ENCODE measurements at regions of chrX and their contacts with region 1.

Region 1: DNA sequence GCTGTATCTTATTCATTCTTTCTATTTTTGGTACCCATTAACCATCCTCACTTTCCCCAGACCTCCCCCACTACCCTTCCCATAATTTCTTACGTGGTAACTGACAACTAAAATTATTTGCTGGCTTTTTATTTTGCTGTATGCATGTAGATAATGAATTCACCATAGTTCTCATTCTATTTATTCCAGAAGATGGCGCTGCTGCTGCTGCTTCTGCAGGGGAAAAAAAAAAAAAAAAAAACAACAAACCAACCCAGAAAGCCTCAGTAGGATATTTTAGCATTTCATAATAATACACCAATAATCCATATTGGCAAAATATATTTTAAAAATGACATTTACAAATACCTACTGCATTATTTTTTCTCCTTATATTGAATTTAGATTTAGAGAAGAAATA is 416.6 kb upstream of the MAGEB18 start:
- DNase-seq: peak in 1 of 2 experiments; percentile 1
- H3K4me3 ChIP-seq: no peak overlapping the region
- H3K4me3 Mint-ChIP-seq: no peak overlapping the region
- H3K27ac Mint-ChIP-seq: no peak overlapping the region
- H3K4me1 ChIP-seq: no peaks in the 10 kb centered on the region
- H3K4me1 Mint-ChIP-seq: no peaks in the 10 kb centered on the region
- H3K27me3 ChIP-seq: no peaks in the 10 kb centered on the region
- H3K27me3 Mint-ChIP-seq: no peaks in the 10 kb centered on the region
- CTCF ChIP-seq: peak; percentile 14 to 26

Region 2: DNA sequence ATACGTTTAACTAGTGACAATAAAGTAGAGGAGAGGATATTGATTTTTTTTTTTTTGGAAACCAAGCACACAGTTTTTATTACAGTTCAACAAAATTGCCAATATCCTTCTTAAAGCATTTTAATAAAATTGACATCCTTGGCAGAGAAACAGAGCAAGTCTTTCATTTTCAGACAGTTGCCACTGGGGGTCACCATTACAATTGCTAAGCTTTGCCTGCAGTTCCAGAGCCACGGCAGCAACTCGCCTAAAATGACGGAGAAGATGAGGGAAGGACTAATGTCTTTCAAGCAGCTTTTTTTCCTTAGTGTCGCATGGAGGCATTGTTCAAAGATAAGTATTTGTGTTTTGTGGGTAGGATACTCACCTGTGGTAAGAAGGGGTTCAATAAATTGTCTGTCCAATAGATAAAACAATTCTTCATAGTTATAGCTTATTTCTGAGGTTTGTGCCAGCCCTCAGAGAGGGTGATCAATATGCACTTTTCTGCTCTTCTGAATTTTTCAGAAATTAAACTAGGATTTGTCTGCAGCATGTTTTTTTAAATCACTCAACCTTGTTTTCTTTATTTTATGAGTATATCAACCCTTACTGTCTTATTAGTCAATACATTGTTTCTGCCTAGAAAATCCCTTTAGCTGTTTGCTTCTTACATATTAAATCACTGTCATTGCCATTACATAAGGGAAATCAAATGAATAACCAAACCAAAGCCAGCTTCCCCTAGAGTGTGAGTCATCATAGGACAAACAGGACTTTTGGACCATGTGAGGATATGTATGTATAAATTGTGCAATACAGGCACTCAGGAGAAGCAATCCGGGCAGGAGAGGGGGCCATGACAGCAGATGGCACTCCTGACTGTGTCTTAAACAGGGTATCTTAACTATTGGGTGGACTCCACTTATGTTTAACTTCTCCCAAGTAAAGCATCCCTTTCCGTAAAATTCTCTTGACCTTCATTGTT is 197.7 kb before region 1 on chrX:
- CTCF ChIA-PET with region 1: no interaction called
- POLR2A ChIA-PET with region 1: no interaction called
- intact Hi-C with region 1: loop called (anchors 5 kb)
- DNase-seq: peak; percentile 45 to 47
- H3K4me3 ChIP-seq: no peak overlapping the region
- H3K4me3 Mint-ChIP-seq: peak overlapping the region; percentile 24
- H3K27ac Mint-ChIP-seq: no peak overlapping the region
- H3K4me1 ChIP-seq: 0 out of 2 replicates have a peak, but pooled peaks cover 4% of the 10 kb centered on the region
- H3K4me1 Mint-ChIP-seq: no peaks in the 10 kb centered on the region
- H3K27me3 ChIP-seq: no peaks in the 10 kb centered on the region
- H3K27me3 Mint-ChIP-seq: peaks cover 2% of the 10 kb centered on the region
- CTCF ChIP-seq: peak in 1 of 2 experiments; percentile 48

Region 3: GRCh38 chrX:25873196-25873595 is 151.6 kb after region 1 on chrX:
- CTCF ChIA-PET with region 1: no interaction called
- POLR2A ChIA-PET with region 1: no interaction called
- intact Hi-C with region 1: no loop called
- DNase-seq: no peak
- H3K4me3 ChIP-seq: no peak overlapping the region
- H3K4me3 Mint-ChIP-seq: no peak overlapping the region
- H3K27ac Mint-ChIP-seq: no peak overlapping the region
- H3K4me1 ChIP-seq: no peaks in the 10 kb centered on the region
- H3K4me1 Mint-ChIP-seq: no peaks in the 10 kb centered on the region
- H3K27me3 ChIP-seq: no peaks in the 10 kb centered on the region
- H3K27me3 Mint-ChIP-seq: no peaks in the 10 kb centered on the region
- CTCF ChIP-seq: no peak

Region 4: DNA sequence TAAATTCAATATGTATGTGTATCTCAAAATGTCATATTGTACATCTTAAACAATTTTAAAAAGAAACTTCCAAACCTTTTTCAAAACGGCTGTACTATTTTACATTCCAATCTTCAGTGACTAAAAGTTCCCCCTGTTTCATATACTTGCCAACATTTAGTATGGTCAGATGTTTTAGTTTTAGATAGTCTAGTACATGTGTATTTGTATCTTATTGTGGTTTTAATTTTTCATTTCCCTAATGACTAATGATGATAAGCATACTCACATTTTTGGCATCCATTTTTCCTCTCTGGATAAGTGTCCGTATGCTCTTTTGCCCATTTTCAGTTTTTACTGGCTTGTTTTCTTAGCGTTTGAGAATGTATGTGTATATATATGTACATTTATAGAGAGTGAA is 204.4 kb after region 1 on chrX:
- CTCF ChIA-PET with region 1: no interaction called
- POLR2A ChIA-PET with region 1: no interaction called
- intact Hi-C with region 1: no loop called
- DNase-seq: no peak
- H3K4me3 ChIP-seq: no peak overlapping the region
- H3K4me3 Mint-ChIP-seq: no peak overlapping the region
- H3K27ac Mint-ChIP-seq: no peak overlapping the region
- H3K4me1 ChIP-seq: no peaks in the 10 kb centered on the region
- H3K4me1 Mint-ChIP-seq: no peaks in the 10 kb centered on the region
- H3K27me3 ChIP-seq: no peaks in the 10 kb centered on the region
- H3K27me3 Mint-ChIP-seq: no peaks in the 10 kb centered on the region
- CTCF ChIP-seq: no peak

Region 5: DNA sequence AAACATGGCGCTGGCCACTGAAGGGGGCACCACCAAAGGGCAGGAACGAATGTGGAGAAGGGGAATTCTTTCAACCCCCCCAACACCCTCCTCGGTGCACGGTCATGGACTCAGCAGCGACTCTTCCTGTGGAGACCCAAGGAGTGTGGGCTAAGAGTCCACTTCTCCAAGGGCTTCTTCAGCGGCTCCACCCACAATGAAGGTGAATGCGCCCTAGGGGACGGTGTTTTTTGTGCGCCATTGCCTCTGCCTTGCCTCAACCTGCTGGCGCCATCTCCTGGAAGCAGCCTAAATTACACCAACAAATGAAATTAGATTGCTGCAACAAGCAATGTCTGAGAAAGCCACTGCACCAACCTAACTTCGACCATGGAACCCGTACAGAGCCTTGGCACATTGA is 247.4 kb after region 1 on chrX:
- CTCF ChIA-PET with region 1: no interaction called
- POLR2A ChIA-PET with region 1: no interaction called
- intact Hi-C with region 1: loop called (anchors 5 kb)
- DNase-seq: peak; percentile 38 to 40
- H3K4me3 ChIP-seq: no peak overlapping the region
- H3K4me3 Mint-ChIP-seq: no peak overlapping the region
- H3K27ac Mint-ChIP-seq: no peak overlapping the region
- H3K4me1 ChIP-seq: no peaks in the 10 kb centered on the region
- H3K4me1 Mint-ChIP-seq: no peaks in the 10 kb centered on the region
- H3K27me3 ChIP-seq: no peaks in the 10 kb centered on the region
- H3K27me3 Mint-ChIP-seq: no peaks in the 10 kb centered on the region
- CTCF ChIP-seq: peak; percentile 17 to 35